ENCODE measurements at regions of chr10 and their contacts with region 1.

Region 1: GRCh38 chr10:22436884-22437619 is 91.8 kb downstream of the SPAG6 start:
- DNase-seq: peak; percentile 90 to 96 (median 93)
- ATAC-seq: peak; percentile 89 to 97 (median 97)
- H3K4me3 ChIP-seq: peak overlapping the region; percentile 54 to 88 (median 76)
- H3K27ac ChIP-seq: peak overlapping the region; percentile 78 to 98 (median 95)
- H3K4me1 ChIP-seq: peaks cover 0 to 30% (median 15%) of the 10 kb centered on the region in 12 donors
- H3K27me3 ChIP-seq: peaks cover 0 to 3% (median 0%) of the 10 kb centered on the region in 9 donors
- CTCF ChIP-seq: peak in 8 of 12 donors; percentile 5 to 50 (median 27)
- POLR2A ChIP-seq: peak in 1 of 2 donors; percentile 78

Region 2: GRCh38 chr10:22193945-22194344 is 243.1 kb before region 1 on chr10:
- intact Hi-C with region 1: no loop called
- DNase-seq: no peak
- ATAC-seq: no peak
- H3K4me3 ChIP-seq: no peak overlapping the region
- H3K27ac ChIP-seq: no peak overlapping the region
- H3K4me1 ChIP-seq: no peaks in the 10 kb centered on the region
- H3K27me3 ChIP-seq: peaks cover 0 to 10% (median 0%) of the 10 kb centered on the region in 9 donors
- CTCF ChIP-seq: no peak
- POLR2A ChIP-seq: no peak

Region 3: GRCh38 chr10:22228943-22229801 is 207.9 kb before region 1 on chr10:
- intact Hi-C with region 1: loop called in 3 of 10 experiments (anchors 10 kb)
- DNase-seq: peak; percentile 85 to 90 (median 88)
- ATAC-seq: peak; percentile 91 to 100 (median 98)
- H3K4me3 ChIP-seq: peak overlapping the region; percentile 57 to 89 (median 77)
- H3K27ac ChIP-seq: peak overlapping the region; percentile 85 to 97 (median 92)
- H3K4me1 ChIP-seq: peaks cover 0 to 9% (median 6%) of the 10 kb centered on the region in 12 donors
- H3K27me3 ChIP-seq: no peaks in the 10 kb centered on the region
- CTCF ChIP-seq: no peak
- POLR2A ChIP-seq: peak in 1 of 2 donors; percentile 56

Region 4: DNA sequence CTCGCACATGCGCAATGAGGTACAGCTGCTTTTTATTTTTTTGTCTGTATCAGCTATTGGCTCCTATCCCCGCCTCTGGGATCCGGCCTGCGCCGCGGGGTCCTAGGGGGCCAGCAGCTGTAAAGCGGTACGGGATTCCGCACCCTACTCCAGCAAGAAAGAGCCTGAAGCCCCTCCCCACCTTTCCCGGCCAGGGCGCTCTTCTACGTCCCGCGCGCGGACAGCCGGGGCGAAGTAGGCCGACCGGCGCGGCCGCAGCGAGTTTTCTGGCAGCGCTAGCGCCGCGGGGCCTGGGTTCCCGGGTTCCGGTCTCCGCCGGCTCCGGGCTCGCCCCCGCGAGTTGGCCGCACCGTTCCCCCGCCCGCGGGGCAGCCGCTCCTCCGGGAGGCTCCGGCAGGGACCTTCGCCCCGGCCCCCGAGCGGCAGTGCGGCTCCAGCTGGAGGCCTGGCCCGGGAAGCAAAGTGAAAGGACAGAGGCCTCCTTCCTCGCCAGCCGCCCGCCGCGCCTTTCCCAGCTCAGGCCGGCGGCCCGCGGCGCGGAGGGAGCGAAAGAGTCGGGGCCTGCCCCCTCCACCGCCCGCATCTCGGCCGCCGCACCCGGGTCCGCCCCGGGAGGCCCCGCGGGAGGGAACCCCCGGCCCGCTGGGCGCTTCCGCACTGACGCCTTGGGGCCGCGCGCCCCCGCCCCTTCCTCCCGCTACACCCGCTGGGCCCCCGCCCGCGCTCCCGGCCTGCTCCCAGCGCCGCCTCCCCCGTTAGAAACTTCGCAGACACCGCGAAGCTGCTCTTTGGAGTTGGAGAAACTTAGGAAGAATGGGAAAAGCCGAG is 96.5 kb before region 1 on chr10:
- intact Hi-C with region 1: loop called in 6 of 10 experiments (anchors 2 to 10 kb)
- DNase-seq: peak; percentile 69 to 84 (median 72)
- ATAC-seq: peak; percentile 68 to 87 (median 86)
- H3K4me3 ChIP-seq: peak overlapping the region; percentile 62 to 94 (median 81)
- H3K27ac ChIP-seq: peak overlapping the region; percentile 81 to 97 (median 92)
- H3K4me1 ChIP-seq: peaks cover 8 to 37% (median 18%) of the 10 kb centered on the region in 12 donors
- H3K27me3 ChIP-seq: peaks cover 66 to 91% (median 84%) of the 10 kb centered on the region in 9 donors
- CTCF ChIP-seq: no peak
- POLR2A ChIP-seq: peak in 1 of 2 donors; percentile 57

Region 5: GRCh38 chr10:22515009-22515408 is 78.0 kb after region 1 on chr10:
- intact Hi-C with region 1: no loop called
- DNase-seq: no peak
- ATAC-seq: no peak
- H3K4me3 ChIP-seq: no peak overlapping the region
- H3K27ac ChIP-seq: no peak overlapping the region
- H3K4me1 ChIP-seq: no peaks in the 10 kb centered on the region
- H3K27me3 ChIP-seq: peaks cover 0 to 18% (median 0%) of the 10 kb centered on the region in 9 donors
- CTCF ChIP-seq: no peak
- POLR2A ChIP-seq: no peak

Region 6: DNA sequence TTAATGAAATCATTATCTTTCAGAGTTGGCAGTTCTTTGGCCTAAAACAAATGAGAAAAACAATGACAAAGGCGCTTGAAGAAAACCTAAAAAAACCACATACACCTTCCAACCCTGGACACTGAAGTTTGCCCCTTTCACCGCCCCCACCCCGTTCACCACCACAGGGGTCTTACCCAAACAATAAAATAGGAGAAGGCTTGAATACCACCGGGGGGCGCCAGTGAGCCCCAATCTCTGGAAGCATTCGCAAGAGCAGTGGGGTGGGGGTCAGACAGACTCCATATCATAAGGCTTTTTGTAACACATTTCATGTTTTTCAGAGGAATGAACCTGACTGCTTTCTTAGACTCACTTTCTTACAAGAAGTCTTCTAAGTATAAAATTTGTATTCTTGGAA is 113.7 kb after region 1 on chr10:
- intact Hi-C with region 1: loop called in 1 of 10 experiments (anchors 5 kb)
- DNase-seq: peak in 4 of 5 donors; percentile 25 to 74 (median 39)
- ATAC-seq: no peak
- H3K4me3 ChIP-seq: no peak overlapping the region
- H3K27ac ChIP-seq: no peak overlapping the region
- H3K4me1 ChIP-seq: peaks cover 0 to 13% (median 0%) of the 10 kb centered on the region in 12 donors
- H3K27me3 ChIP-seq: no peaks in the 10 kb centered on the region
- CTCF ChIP-seq: peak; percentile 36 to 63 (median 54)
- POLR2A ChIP-seq: no peak

Region 7: GRCh38 chr10:23139677-23140076 is 702.6 kb after region 1 on chr10:
- intact Hi-C with region 1: no loop called
- DNase-seq: no peak
- ATAC-seq: no peak
- H3K4me3 ChIP-seq: no peak overlapping the region
- H3K27ac ChIP-seq: no peak overlapping the region
- H3K4me1 ChIP-seq: no peaks in the 10 kb centered on the region
- H3K27me3 ChIP-seq: no peaks in the 10 kb centered on the region
- CTCF ChIP-seq: no peak
- POLR2A ChIP-seq: no peak

Measured in heart left ventricle (tissue), 16 donors.